ENCODE measurements at regions of chr10 and their contacts with region 1.

Region 1: GRCh38 chr10:26334932-26335573 is 103.1 kb upstream of the APBB1IP start:
- DNase-seq: peak; percentile 31 to 85 (median 63)
- ATAC-seq: peak; percentile 92
- H3K4me3 ChIP-seq: peak overlapping the region; percentile 36 to 50
- H3K4me3 Mint-ChIP-seq: peak overlapping the region; percentile 78
- H3K27ac ChIP-seq: no peak overlapping the region
- H3K27ac Mint-ChIP-seq: peak overlapping the region; percentile 16
- H3K4me1 ChIP-seq: no peaks in the 10 kb centered on the region
- H3K4me1 Mint-ChIP-seq: peaks cover 5% of the 10 kb centered on the region
- H3K27me3 ChIP-seq: no peaks in the 10 kb centered on the region
- H3K27me3 Mint-ChIP-seq: no peaks in the 10 kb centered on the region
- CTCF ChIP-seq: peak; percentile 99

Region 2: DNA sequence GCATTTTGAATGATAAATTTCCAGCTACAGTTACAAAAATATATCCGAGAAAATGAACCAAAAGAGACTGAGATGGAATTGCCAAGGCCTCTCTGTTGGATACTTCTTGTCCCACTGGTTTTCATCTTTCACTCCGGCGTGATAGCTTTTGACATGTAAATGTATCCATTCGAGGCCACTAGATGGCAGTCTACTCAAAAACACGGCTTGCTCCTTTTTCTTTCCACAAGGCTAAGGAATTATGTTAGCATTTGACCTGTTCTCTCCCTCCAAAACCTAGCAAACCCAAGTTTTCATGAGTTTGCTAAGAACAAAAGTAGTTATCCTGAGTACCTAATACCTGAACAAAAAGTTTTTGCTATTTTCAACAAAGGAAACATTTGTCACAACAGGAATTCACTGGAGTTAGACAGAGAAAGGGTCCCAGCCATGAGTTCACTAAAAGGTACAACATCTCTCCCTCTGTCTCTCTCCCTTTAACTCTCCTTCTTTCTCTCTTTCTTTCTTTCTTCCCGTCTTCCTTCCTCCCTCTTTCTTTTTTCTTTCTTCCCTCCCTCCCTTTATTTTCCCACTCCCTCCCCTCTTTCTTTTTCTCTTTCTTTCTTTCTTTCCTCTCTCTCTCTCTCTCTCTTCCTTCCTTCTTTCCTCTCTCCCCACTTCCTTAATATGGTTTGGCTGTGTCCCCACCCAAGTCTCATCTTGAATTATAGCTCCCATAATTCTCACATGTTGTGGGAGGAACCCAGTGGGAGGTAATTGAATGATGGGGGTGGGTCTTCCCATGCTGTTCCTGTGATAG is 608.9 kb before region 1 on chr10:
- CTCF ChIA-PET with region 1: no interaction called
- POLR2A ChIA-PET with region 1: no interaction called
- intact Hi-C with region 1: loop called in 1 of 2 experiments (anchors 10 kb)
- DNase-seq: peak in 3 of 9 experiments; percentile 6 to 44 (median 29)
- ATAC-seq: no peak
- H3K4me3 ChIP-seq: no peak overlapping the region
- H3K4me3 Mint-ChIP-seq: no peak overlapping the region
- H3K27ac ChIP-seq: no peak overlapping the region
- H3K27ac Mint-ChIP-seq: no peak overlapping the region
- H3K4me1 ChIP-seq: no peaks in the 10 kb centered on the region
- H3K4me1 Mint-ChIP-seq: peaks cover 4% of the 10 kb centered on the region
- H3K27me3 ChIP-seq: no peaks in the 10 kb centered on the region
- H3K27me3 Mint-ChIP-seq: peaks cover 7% of the 10 kb centered on the region
- CTCF ChIP-seq: peak; percentile 71

Region 3: GRCh38 chr10:26367771-26368170 is 32.7 kb after region 1 on chr10:
- CTCF ChIA-PET with region 1: no interaction called
- POLR2A ChIA-PET with region 1: no interaction called
- intact Hi-C with region 1: no loop called
- DNase-seq: peak in 6 of 9 experiments; percentile 3 to 43 (median 28)
- ATAC-seq: no peak
- H3K4me3 ChIP-seq: no peak overlapping the region
- H3K4me3 Mint-ChIP-seq: no peak overlapping the region
- H3K27ac ChIP-seq: no peak overlapping the region
- H3K27ac Mint-ChIP-seq: no peak overlapping the region
- H3K4me1 ChIP-seq: no peaks in the 10 kb centered on the region
- H3K4me1 Mint-ChIP-seq: no peaks in the 10 kb centered on the region
- H3K27me3 ChIP-seq: no peaks in the 10 kb centered on the region
- H3K27me3 Mint-ChIP-seq: no peaks in the 10 kb centered on the region
- CTCF ChIP-seq: no peak

Region 4: GRCh38 chr10:26486991-26487850 is 152.2 kb after region 1 on chr10:
- CTCF ChIA-PET with region 1: no interaction called
- POLR2A ChIA-PET with region 1: no interaction called
- intact Hi-C with region 1: loop called in 1 of 2 experiments (anchors 5 kb)
- DNase-seq: peak; percentile 16 to 92 (median 69)
- ATAC-seq: peak; percentile 75
- H3K4me3 ChIP-seq: peak overlapping the region in 1 of 2 experiments; percentile 2
- H3K4me3 Mint-ChIP-seq: peak overlapping the region; percentile 66
- H3K27ac ChIP-seq: peak overlapping the region; percentile 73 to 91
- H3K27ac Mint-ChIP-seq: peak overlapping the region; percentile 97
- H3K4me1 ChIP-seq: peaks cover 66% of the 10 kb centered on the region
- H3K4me1 Mint-ChIP-seq: peaks cover 71% of the 10 kb centered on the region
- H3K27me3 ChIP-seq: no peaks in the 10 kb centered on the region
- H3K27me3 Mint-ChIP-seq: no peaks in the 10 kb centered on the region
- CTCF ChIP-seq: no peak

Region 5: DNA sequence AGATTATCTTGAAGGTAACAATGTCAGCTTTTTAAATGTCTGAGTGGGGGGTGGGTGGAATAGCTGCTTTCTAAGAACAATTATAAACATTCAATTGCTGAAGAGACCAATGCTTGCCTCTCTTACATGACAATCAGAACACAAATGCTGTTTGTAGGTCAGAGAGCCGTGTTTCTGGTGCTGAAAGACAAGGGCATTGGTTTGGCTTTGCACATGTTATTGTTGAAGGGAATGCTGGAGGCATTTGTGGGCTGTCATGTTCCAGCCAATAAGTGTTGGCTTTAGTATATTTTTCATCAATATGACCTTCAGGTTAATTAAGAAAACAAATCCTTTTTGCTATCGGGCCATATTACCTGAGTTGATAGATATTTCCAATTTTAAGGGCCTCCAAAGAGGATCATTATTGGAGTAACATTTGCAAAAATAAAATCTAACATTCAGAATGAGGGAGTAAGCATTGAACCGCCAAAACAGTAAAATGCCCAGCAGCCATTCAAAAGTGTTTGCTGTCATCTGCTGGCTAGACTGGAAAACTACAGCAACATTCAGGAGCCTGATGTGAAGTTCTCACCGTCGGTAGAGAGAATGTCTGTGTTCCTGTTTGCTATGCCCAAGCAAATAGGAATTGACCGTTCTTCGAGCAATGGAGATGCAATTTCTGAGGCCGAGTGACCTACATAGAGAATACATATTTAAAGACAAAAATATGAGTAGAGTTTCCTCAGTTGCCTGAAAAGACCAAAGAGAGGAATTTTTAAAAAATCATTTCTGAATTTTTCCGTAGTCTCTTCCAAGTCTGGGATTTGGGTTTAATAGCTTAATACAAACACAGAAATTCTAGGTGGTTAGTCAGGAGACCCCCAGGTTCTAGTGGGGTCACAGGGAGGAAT is 221.9 kb after region 1 on chr10:
- CTCF ChIA-PET with region 1: interaction called, 125 read pairs
- POLR2A ChIA-PET with region 1: no interaction called
- intact Hi-C with region 1: loop called (anchors 1 kb)
- DNase-seq: peak in 8 of 9 experiments; percentile 5 to 70 (median 34)
- ATAC-seq: peak; percentile 64
- H3K4me3 ChIP-seq: no peak overlapping the region
- H3K4me3 Mint-ChIP-seq: no peak overlapping the region
- H3K27ac ChIP-seq: no peak overlapping the region
- H3K27ac Mint-ChIP-seq: peak overlapping the region; percentile 91
- H3K4me1 ChIP-seq: no peaks in the 10 kb centered on the region
- H3K4me1 Mint-ChIP-seq: peaks cover 15% of the 10 kb centered on the region
- H3K27me3 ChIP-seq: no peaks in the 10 kb centered on the region
- H3K27me3 Mint-ChIP-seq: no peaks in the 10 kb centered on the region
- CTCF ChIP-seq: peak; percentile 99

Region 6: DNA sequence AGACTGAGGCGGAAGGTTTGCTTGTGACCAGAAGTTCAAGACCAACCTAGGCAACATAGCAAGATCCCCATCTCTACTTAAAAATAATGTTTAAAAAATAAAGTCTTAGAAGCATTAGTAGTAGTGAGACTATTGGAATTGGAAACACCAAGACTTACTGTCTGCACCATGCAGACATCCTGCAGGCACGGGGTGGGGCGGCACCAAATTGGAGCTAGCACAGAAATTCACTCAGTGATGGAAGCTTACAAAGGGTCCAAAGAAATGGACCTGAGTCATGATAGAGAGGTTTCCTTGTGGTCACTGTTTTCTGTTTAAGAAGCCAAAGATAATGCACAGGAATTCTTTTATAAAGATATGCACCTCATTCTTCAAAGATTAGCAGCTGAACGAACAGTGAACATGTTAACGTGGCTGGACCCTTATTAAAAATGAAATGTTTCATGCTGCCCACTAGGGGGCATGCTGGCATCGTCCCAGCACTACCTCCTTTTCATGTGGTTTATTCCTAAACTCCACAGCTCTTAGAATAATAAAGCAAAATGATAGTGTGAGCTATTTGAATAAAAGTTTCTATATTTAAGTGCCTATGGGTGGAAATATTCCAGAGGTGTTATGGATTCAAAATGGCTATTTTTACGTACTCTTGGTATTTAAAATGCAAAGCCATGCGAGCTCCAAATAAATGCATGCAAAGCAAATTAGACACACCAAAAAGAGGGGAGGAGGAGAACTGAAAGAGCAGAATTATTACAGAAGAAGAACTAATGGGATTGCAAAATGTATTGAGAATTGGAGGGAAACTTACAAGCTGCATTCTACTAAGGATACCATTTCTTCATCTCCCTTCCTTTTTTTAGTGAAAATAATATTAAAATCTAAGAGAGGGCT is 391.0 kb after region 1 on chr10:
- CTCF ChIA-PET with region 1: interaction called, 10 read pairs
- POLR2A ChIA-PET with region 1: no interaction called
- intact Hi-C with region 1: loop called in 1 of 2 experiments (anchors 1 kb)
- DNase-seq: peak in 8 of 9 experiments; percentile 26 to 77 (median 48)
- ATAC-seq: peak; percentile 47
- H3K4me3 ChIP-seq: no peak overlapping the region
- H3K4me3 Mint-ChIP-seq: no peak overlapping the region
- H3K27ac ChIP-seq: no peak overlapping the region
- H3K27ac Mint-ChIP-seq: no peak overlapping the region
- H3K4me1 ChIP-seq: peaks cover 5% of the 10 kb centered on the region
- H3K4me1 Mint-ChIP-seq: peaks cover 12% of the 10 kb centered on the region
- H3K27me3 ChIP-seq: no peaks in the 10 kb centered on the region
- H3K27me3 Mint-ChIP-seq: no peaks in the 10 kb centered on the region
- CTCF ChIP-seq: peak; percentile 99

Region 7: DNA sequence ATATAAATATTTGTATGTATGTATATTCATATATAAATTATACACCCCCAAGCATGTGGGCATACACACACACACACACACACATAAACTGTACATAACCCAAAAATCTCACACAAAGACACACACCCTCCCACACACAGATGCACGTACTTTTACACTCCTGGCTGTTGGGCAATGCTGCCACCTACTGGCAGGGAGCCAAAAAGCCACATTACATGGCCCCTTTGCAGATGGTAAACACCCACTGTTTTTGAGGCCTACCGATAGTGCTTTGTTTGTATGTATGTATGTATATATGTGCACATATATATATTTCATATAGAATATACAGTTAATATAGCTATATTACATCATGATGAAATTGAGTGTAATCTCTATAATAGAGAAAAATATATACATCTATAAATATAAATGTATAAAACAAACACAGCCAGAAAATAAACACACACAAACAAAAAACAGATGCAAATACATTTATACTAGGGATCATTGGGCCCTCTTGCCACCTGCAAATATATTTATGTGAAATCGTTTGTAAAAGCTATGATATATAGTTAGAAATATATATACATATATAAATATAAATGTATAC is 1025.6 kb after region 1 on chr10:
- CTCF ChIA-PET with region 1: interaction called, 3 read pairs
- POLR2A ChIA-PET with region 1: no interaction called
- intact Hi-C with region 1: loop called in 1 of 2 experiments (anchors 5 kb)
- DNase-seq: peak; percentile 63 to 89 (median 83)
- ATAC-seq: peak; percentile 99
- H3K4me3 ChIP-seq: no peak overlapping the region
- H3K4me3 Mint-ChIP-seq: no peak overlapping the region
- H3K27ac ChIP-seq: no peak overlapping the region
- H3K27ac Mint-ChIP-seq: no peak overlapping the region
- H3K4me1 ChIP-seq: no peaks in the 10 kb centered on the region
- H3K4me1 Mint-ChIP-seq: no peaks in the 10 kb centered on the region
- H3K27me3 ChIP-seq: no peaks in the 10 kb centered on the region
- H3K27me3 Mint-ChIP-seq: no peaks in the 10 kb centered on the region
- CTCF ChIP-seq: peak; percentile 99